CD8-positive, alpha-beta memory T cell (primary cell): ENCODE measurements at regions of chr1 and their contacts with region 1.

Region 1: GRCh38 chr1:36369061-36369861 is 16.5 kb downstream of the STK40 start:
- DNase-seq: peak; percentile 72 to 86 (median 79)
- H3K4me3 ChIP-seq: no peak overlapping the region
- H3K4me3 Mint-ChIP-seq: no peak overlapping the region
- H3K27ac ChIP-seq: peak overlapping the region; percentile 8
- H3K27ac Mint-ChIP-seq: peak overlapping the region; percentile 6 to 91 (median 84)
- H3K4me1 ChIP-seq: peaks cover 70% of the 10 kb centered on the region
- H3K4me1 Mint-ChIP-seq: peaks cover 56 to 71% (median 67%) of the 10 kb centered on the region in 3 donors
- H3K27me3 ChIP-seq: no peaks in the 10 kb centered on the region
- H3K27me3 Mint-ChIP-seq: no peaks in the 10 kb centered on the region

Region 2: GRCh38 chr1:36342481-36343478 is 26.5 kb before region 1 on chr1:
- CTCF ChIA-PET with region 1: interaction called, 23 read pairs
- POLR2A ChIA-PET with region 1: no interaction called
- DNase-seq: peak; percentile 41 to 70 (median 46)
- H3K4me3 ChIP-seq: no peak overlapping the region
- H3K4me3 Mint-ChIP-seq: no peak overlapping the region
- H3K27ac ChIP-seq: no peak overlapping the region
- H3K27ac Mint-ChIP-seq: peak overlapping the region in 4 of 8 donors; percentile 17 to 66 (median 55)
- H3K4me1 ChIP-seq: peaks cover 10% of the 10 kb centered on the region
- H3K4me1 Mint-ChIP-seq: peaks cover 3 to 9% (median 4%) of the 10 kb centered on the region in 3 donors
- H3K27me3 ChIP-seq: no peaks in the 10 kb centered on the region
- H3K27me3 Mint-ChIP-seq: no peaks in the 10 kb centered on the region

Region 3: GRCh38 chr1:36352948-36353878 is 16.0 kb before region 1 on chr1:
- CTCF ChIA-PET with region 1: interaction called, 11 read pairs
- POLR2A ChIA-PET with region 1: no interaction called
- DNase-seq: no peak
- H3K4me3 ChIP-seq: no peak overlapping the region
- H3K4me3 Mint-ChIP-seq: no peak overlapping the region
- H3K27ac ChIP-seq: no peak overlapping the region
- H3K27ac Mint-ChIP-seq: peak overlapping the region in 2 of 8 donors; percentile 52 to 94
- H3K4me1 ChIP-seq: peaks cover 21% of the 10 kb centered on the region
- H3K4me1 Mint-ChIP-seq: peaks cover 8 to 11% (median 11%) of the 10 kb centered on the region in 3 donors
- H3K27me3 ChIP-seq: no peaks in the 10 kb centered on the region
- H3K27me3 Mint-ChIP-seq: peaks cover 0 to 2% of the 10 kb centered on the region in 2 donors